ENCODE measurements at regions of chr6 and their contacts with region 1.

Region 1: GRCh38 chr6:17808609-17809008 is 101.9 kb upstream of the NUP153 start:
- DNase-seq: no peak
- CTCF ChIP-seq: no peak

Region 2: DNA sequence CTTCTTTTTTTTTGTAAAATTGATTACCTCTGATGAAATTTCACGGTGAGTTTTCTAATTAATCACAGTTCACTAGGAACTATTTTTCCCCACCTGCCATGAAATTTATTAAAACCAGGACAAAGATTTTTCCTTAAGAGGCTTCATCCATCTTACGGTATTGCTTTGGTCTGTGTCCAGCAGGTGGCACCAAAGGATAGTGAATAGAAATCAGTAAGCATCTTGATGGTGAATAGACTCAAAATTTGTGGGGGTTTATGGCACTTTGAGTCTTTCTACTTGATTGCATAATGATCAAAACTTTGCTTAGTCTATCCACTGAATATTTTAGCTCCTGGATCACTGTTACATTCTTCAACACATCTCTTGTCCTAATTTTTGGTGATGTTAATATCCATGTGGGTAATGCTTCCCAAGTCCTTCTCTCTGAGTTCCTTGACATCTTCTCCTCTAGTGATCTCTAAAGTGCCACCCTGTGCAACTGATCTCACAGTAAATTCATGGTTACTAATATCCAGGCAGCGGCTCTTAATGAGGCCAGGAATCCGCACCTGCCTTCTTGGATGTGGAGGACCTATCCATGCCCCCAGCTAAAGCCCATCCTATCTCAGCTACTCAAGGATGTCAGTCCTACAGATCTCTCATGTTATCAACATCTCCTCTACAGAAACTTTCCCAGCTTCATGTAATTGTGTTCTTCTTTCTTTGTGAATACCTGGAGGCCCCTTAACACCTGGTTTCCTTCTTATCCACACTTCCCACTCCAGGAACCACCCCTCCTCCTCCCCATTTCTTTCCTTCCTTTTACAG is 652.3 kb before region 1 on chr6:
- in situ Hi-C with region 1: loop called (anchors 10 kb)
- DNase-seq: peak; percentile 58
- CTCF ChIP-seq: peak; percentile 60

Region 3: DNA sequence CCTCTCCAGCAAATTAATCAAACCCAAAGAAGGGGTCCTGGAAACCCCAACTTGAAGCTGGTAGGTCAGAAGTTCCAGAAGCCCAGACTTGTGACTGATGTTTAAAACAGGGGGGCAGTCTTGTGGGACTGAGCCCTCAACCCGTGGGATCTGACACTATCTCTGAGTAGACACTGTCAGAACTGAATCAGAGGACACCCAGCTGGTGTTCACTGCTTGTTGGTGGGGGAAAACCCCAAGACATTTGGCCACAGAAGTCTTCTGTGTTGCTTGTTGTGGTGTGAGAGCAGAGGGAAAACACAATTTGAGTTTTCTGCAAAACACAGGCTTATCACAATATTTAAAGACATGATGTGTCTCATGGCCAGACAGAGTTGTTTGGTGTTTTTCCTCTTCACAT is 148.9 kb after region 1 on chr6:
- in situ Hi-C with region 1: no loop called
- DNase-seq: no peak
- CTCF ChIP-seq: no peak

Region 4: DNA sequence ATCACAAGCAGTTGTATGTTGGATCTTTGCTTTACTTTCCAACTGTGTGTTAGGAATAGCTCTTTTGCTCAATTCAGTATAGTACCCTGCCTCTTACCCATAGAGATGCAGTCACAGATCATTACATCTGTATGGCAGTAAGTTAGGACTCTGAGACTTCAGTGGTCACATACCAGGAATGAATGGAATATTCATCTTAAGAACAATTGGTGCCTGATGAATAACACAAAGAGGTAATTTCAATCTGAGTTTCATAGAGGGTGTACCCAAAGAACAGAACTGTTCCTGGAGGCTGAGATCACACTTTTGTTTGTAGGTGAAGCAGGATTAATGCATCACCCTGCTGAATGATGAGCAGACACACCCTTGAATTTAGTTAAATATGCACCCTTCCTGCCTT is 207.5 kb after region 1 on chr6:
- in situ Hi-C with region 1: no loop called
- DNase-seq: no peak
- CTCF ChIP-seq: no peak

Region 5: GRCh38 chr6:18262702-18263417 is 454.3 kb after region 1 on chr6:
- in situ Hi-C with region 1: no loop called
- DNase-seq: peak; percentile 74
- CTCF ChIP-seq: no peak

Measured in GM13976 (cell line).